PC-3 (cell line): ENCODE measurements at regions of chr12 and their contacts with region 1.

Region 1: DNA sequence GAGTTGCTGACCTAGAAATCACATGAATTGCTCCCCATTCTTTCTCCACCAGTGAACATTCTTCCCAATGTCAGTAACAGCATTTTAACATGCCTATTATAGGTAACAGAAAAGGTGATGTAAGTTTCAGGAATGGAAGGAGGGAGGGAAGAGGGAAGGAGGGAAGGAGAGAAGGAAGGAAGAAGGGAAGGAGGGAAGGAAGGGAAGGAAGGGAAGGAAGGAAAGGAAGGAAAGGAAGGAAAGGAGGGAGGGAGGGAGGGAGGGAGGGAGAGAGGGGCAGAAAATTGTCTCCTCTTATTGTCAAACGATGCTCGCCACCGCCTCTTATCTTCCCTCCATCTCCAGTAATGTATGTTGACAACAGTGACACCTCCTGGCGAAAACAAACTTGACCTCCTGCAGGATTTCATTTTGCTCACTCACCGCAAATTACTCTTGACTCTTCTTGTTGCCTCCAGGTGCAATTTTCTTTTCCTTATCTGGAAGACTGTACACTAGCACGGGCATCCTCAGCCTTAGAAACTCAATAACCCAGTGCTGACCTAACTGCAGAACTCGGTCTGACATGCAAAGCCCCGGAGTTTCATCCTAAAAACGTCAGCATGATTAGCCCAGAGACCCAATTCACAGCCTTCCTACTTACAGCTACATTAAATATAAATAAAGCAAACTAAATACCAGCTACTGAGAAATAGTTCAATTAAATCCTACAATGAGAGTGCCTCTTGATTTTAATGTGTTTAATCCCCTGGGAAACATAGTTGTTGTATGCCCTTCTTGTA is 512.5 kb upstream of the TMPO start:
- DNase-seq: peak; percentile 77
- ATAC-seq: 0 out of 2 replicates have a peak, but pooled peaks have one; percentile 49
- H3K4me3 ChIP-seq: no peak overlapping the region
- H3K27ac ChIP-seq: no peak overlapping the region
- H3K4me1 ChIP-seq: no peaks in the 10 kb centered on the region
- H3K27me3 ChIP-seq: no peaks in the 10 kb centered on the region
- CTCF ChIP-seq: peak; percentile 60

Region 2: GRCh38 chr12:96751626-96752025 is 1251.3 kb before region 1 on chr12:
- CTCF ChIA-PET with region 1: no interaction called
- POLR2A ChIA-PET with region 1: no interaction called
- intact Hi-C with region 1: no loop called
- DNase-seq: no peak
- ATAC-seq: no peak
- H3K4me3 ChIP-seq: no peak overlapping the region
- H3K27ac ChIP-seq: no peak overlapping the region
- H3K4me1 ChIP-seq: no peaks in the 10 kb centered on the region
- H3K27me3 ChIP-seq: no peaks in the 10 kb centered on the region
- CTCF ChIP-seq: no peak

Region 3: GRCh38 chr12:97886511-97887176 is 116.3 kb before region 1 on chr12:
- CTCF ChIA-PET with region 1: no interaction called
- POLR2A ChIA-PET with region 1: no interaction called
- intact Hi-C with region 1: no loop called
- DNase-seq: no peak
- ATAC-seq: no peak
- H3K4me3 ChIP-seq: no peak overlapping the region
- H3K27ac ChIP-seq: no peak overlapping the region
- H3K4me1 ChIP-seq: no peaks in the 10 kb centered on the region
- H3K27me3 ChIP-seq: no peaks in the 10 kb centered on the region
- CTCF ChIP-seq: no peak

Region 4: DNA sequence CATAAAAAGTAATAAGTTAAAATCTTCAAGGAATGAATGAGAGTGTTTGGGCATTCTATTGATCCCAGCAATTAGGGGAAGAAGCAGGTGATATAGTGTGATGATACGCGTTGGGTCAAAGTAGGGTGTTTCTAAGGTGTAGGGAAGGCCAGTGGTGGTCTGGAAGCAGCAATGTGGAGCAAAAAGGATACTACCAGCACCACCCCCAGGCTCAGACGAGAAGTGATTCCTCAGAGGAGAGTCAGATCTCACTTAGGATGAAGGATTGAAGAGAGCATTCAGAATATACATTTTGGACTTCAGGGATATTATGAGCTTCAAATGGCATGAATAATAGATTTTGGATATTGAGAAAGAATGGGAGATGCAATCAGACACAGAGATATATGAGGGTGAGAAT is 42.7 kb before region 1 on chr12:
- CTCF ChIA-PET with region 1: no interaction called
- POLR2A ChIA-PET with region 1: no interaction called
- intact Hi-C with region 1: no loop called
- DNase-seq: no peak
- ATAC-seq: no peak
- H3K4me3 ChIP-seq: no peak overlapping the region
- H3K27ac ChIP-seq: no peak overlapping the region
- H3K4me1 ChIP-seq: no peaks in the 10 kb centered on the region
- H3K27me3 ChIP-seq: no peaks in the 10 kb centered on the region
- CTCF ChIP-seq: no peak

Region 5: DNA sequence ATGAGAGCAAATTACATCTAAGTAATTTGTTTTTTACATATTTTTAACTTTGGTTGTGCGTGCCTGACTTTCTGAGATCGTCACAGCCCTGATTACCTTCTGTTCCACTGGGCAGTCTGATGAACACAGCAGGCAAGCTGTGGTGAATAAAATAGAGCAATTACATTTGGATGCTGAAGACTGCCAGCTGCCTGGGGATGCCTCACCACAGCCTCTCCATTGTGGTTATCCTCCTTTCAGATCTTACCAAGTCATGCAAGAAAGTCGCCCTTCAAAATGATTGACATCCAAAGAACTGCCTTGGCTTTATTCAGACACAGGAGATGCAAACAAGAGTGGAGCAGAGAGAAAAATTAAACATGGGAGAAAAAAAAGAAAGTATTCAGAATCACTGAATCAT is 55.9 kb after region 1 on chr12:
- CTCF ChIA-PET with region 1: no interaction called
- POLR2A ChIA-PET with region 1: no interaction called
- intact Hi-C with region 1: no loop called
- DNase-seq: no peak
- ATAC-seq: no peak
- H3K4me3 ChIP-seq: no peak overlapping the region
- H3K27ac ChIP-seq: no peak overlapping the region
- H3K4me1 ChIP-seq: no peaks in the 10 kb centered on the region
- H3K27me3 ChIP-seq: 0 out of 2 replicates have a peak, but pooled peaks cover 8% of the 10 kb centered on the region
- CTCF ChIP-seq: no peak

Region 6: GRCh38 chr12:98397316-98398105 is 394.6 kb after region 1 on chr12:
- CTCF ChIA-PET with region 1: no interaction called
- POLR2A ChIA-PET with region 1: no interaction called
- intact Hi-C with region 1: loop called (anchors 10 kb)
- DNase-seq: peak; percentile 91
- ATAC-seq: peak; percentile 88
- H3K4me3 ChIP-seq: peak overlapping the region; percentile 68
- H3K27ac ChIP-seq: no peak overlapping the region
- H3K4me1 ChIP-seq: peaks cover 21% of the 10 kb centered on the region
- H3K27me3 ChIP-seq: peaks cover 6% of the 10 kb centered on the region
- CTCF ChIP-seq: peak; percentile 88